Endothelial cell of umbilical vein (primary cell): ENCODE measurements at regions of chr10 and their contacts with region 1.

Region 1: GRCh38 chr10:80924063-80924952 is 386.6 kb downstream of the SH2D4B start:
- DNase-seq: peak; percentile 56
- H3K4me3 ChIP-seq: no peak overlapping the region
- H3K27ac ChIP-seq: no peak overlapping the region
- H3K4me1 ChIP-seq: no peaks in the 10 kb centered on the region
- H3K27me3 ChIP-seq: peaks cover 0 to 4% of the 10 kb centered on the region in 2 experiments
- CTCF ChIP-seq: peak; percentile 46 to 63
- POLR2A ChIP-seq: no peak

Region 2: GRCh38 chr10:80535671-80536365 is 388.5 kb before region 1 on chr10:
- CTCF ChIA-PET with region 1: no interaction called
- POLR2A ChIA-PET with region 1: no interaction called
- dilution Hi-C with region 1: no loop called
- intact Hi-C with region 1: loop called (anchors 1 kb)
- DNase-seq: peak; percentile 54
- H3K4me3 ChIP-seq: peak overlapping the region; percentile 25 to 54 (median 39)
- H3K27ac ChIP-seq: no peak overlapping the region
- H3K4me1 ChIP-seq: peaks cover 4% of the 10 kb centered on the region
- H3K27me3 ChIP-seq: peaks cover 0 to 1% of the 10 kb centered on the region in 2 experiments
- CTCF ChIP-seq: peak; percentile 64 to 88
- POLR2A ChIP-seq: no peak

Region 3: DNA sequence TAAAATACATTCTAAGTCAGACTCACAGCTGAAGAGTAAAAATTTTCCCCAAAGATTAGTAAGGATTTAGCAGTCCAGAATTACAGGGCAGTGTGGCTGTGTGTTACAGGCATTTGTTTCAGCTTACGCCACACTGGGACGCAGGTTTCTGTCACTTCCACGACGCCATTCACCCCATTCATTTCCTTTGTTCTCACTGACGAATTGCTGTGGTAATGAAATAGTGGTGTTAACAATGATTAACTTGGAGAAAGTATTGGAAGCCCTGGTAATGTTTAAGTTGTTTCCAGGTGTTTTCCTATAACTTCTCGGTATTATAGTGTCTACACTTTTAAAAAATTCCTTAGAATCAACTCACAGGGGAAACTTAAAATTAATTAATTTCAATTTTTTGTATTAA is 15.7 kb before region 1 on chr10:
- CTCF ChIA-PET with region 1: interaction called, 16 read pairs
- POLR2A ChIA-PET with region 1: no interaction called
- dilution Hi-C with region 1: no loop called
- intact Hi-C with region 1: no loop called
- DNase-seq: no peak
- H3K4me3 ChIP-seq: no peak overlapping the region
- H3K27ac ChIP-seq: no peak overlapping the region
- H3K4me1 ChIP-seq: no peaks in the 10 kb centered on the region
- H3K27me3 ChIP-seq: no peaks in the 10 kb centered on the region
- CTCF ChIP-seq: no peak
- POLR2A ChIP-seq: no peak